ENCODE measurements at regions of chr18 and their contacts with region 1.

Region 1: DNA sequence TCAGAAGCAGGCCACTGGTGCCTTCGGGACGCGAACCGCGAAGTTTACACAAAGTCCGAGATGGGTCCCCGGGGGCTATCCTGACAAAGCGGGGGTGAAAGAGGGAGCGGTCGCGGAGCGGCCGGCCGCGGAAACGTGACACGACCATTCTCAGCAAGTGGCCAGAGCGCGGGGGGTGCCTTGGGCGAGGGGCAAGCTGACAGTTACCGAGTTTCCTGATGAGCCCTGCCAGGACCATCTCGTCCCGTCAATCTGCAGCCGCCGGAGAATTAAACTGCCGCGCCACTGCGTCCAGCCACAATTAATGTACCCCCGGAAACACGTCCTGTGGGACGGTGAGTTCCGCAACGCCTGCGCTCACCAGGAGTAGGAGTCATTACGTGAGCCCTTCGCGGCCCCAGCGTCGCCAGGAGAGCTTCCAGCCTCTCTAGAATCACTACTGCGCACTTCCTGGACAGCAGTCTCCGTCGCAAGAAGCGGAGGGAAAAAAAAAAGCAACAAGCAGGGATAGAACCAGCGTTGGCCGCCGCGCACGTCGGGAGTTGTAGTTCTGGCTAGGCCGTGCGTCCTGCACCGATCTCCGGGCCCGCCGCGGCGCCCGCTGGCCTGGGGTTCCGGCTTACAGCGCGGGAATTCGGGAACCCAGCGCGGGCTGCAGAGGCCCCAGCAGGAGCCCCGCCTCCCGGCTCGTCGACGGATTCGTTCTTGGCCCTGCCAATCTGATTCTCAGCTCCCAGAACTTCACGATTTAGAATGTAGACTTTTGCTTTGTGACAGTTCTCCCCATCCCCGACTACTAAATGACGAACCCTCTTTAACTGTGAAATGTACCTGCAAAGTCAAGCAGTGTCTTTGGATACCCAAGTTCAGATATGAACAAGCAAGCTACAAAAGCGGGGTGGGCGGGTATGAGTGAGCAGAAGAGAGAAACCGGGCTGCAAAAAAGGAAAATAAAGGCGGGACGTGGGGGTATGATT is at the start of gene RTTN:
- DNase-seq: peak; percentile 90 to 99 (median 94)

Region 2: GRCh38 chr18:70089858-70090257 is 115.9 kb before region 1 on chr18:
- intact Hi-C with region 1: no loop called
- DNase-seq: no peak

Region 3: GRCh38 chr18:70154591-70155194 is 51.0 kb before region 1 on chr18:
- intact Hi-C with region 1: no loop called
- DNase-seq: no peak

Region 4: DNA sequence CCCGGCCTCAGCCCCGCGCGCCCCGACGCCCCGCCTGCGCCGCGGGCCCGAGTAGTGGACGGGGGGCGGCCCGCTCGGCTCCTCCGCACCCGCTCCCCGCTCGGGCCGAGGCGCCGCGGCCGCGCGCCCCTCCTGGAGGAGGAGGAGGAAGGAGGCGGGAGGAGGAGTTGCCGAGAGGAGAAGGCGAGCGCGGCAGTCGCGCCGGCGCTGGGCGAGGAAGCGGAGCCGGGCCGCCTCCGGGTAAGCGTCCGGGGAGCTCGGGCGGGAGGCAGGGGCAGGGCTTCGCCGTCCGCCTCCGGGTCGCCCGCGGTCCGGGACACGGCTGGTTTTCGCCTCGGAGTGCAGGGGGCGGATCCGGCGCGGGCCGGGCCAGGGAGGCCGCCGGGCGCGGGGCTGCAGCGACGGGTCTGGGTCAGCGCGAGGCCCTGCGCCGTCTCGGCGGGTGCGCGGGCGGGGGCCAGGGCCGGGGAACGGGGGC is 83.2 kb after region 1 on chr18 and contains the start of gene SOCS6:
- intact Hi-C with region 1: loop called (anchors 5 kb)
- DNase-seq: peak; percentile 37 to 95 (median 56)

Measured in posterior cingulate gyrus (tissue), 11 donors.